Caco-2 (cell line): ENCODE measurements at regions of chr14 and their contacts with region 1.

Region 1: GRCh38 chr14:94439453-94440057 is 13.0 kb downstream of the SERPINA11 start:
- DNase-seq: no peak
- H3K4me3 ChIP-seq: no peak overlapping the region
- H3K4me3 Mint-ChIP-seq: no peak overlapping the region
- H3K27ac Mint-ChIP-seq: no peak overlapping the region
- H3K4me1 ChIP-seq: no peaks in the 10 kb centered on the region
- H3K4me1 Mint-ChIP-seq: no peaks in the 10 kb centered on the region
- H3K27me3 ChIP-seq: no peaks in the 10 kb centered on the region
- H3K27me3 Mint-ChIP-seq: peaks cover 3% of the 10 kb centered on the region
- CTCF ChIP-seq: no peak

Region 2: GRCh38 chr14:94540031-94540794 is 100.7 kb after region 1 on chr14:
- CTCF ChIA-PET with region 1: no interaction called
- POLR2A ChIA-PET with region 1: no interaction called
- intact Hi-C with region 1: loop called (anchors 5 kb)
- DNase-seq: no peak
- H3K4me3 ChIP-seq: no peak overlapping the region
- H3K4me3 Mint-ChIP-seq: no peak overlapping the region
- H3K27ac Mint-ChIP-seq: no peak overlapping the region
- H3K4me1 ChIP-seq: no peaks in the 10 kb centered on the region
- H3K4me1 Mint-ChIP-seq: no peaks in the 10 kb centered on the region
- H3K27me3 ChIP-seq: no peaks in the 10 kb centered on the region
- H3K27me3 Mint-ChIP-seq: peaks cover 4% of the 10 kb centered on the region
- CTCF ChIP-seq: peak in 1 of 2 experiments; percentile 20